ENCODE measurements at regions of chr6 and their contacts with region 1.

Region 1: DNA sequence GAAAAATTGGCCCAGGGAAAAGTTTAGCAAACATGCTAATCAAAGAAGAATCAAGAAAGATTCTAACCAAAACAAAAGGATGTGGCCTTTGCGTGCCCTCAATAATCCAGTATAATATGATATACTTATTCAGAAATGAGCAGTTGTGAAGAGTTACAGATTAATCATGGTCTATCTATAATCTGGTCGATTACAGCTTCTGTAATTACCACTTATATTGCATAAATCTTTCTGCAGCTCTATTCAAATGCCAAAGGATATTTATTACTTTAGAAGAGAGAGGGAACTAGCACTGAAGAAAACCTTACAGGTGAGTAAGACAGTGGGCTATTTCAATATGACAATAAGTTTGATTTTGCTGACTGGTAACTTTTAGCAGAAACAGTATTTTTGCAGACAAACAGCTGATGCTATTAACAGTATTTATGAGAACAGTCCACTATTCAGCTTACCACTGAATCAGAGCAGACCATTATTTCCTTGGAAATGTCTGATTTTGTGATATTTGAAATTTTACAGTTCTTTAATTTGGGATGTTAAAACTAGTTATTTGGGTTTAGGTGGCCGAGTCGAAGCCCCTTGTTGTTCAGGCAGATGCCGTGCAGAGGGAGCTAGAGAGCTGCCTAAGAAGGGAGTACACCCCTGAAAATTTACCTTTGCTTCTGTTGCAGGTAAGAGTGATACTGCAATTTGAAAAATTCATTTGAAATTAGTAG is 92.2 kb downstream of the CEP57L1 start:
- DNase-seq: peak; percentile 56 to 74 (median 68)
- ATAC-seq: peak; percentile 88
- H3K4me3 ChIP-seq: no peak overlapping the region
- H3K27ac ChIP-seq: no peak overlapping the region
- H3K4me1 ChIP-seq: peaks cover 0 to 11% of the 10 kb centered on the region in 2 experiments; a peak in 3 of 5 replicates
- H3K27me3 ChIP-seq: no peaks in the 10 kb centered on the region
- CTCF ChIP-seq: peak; percentile 84 to 91 (median 90)
- EP300 ChIP-seq: no peak
- POLR2A ChIP-seq: no peak
- RAD21 ChIP-seq: peak; percentile 97 to 98

Region 2: DNA sequence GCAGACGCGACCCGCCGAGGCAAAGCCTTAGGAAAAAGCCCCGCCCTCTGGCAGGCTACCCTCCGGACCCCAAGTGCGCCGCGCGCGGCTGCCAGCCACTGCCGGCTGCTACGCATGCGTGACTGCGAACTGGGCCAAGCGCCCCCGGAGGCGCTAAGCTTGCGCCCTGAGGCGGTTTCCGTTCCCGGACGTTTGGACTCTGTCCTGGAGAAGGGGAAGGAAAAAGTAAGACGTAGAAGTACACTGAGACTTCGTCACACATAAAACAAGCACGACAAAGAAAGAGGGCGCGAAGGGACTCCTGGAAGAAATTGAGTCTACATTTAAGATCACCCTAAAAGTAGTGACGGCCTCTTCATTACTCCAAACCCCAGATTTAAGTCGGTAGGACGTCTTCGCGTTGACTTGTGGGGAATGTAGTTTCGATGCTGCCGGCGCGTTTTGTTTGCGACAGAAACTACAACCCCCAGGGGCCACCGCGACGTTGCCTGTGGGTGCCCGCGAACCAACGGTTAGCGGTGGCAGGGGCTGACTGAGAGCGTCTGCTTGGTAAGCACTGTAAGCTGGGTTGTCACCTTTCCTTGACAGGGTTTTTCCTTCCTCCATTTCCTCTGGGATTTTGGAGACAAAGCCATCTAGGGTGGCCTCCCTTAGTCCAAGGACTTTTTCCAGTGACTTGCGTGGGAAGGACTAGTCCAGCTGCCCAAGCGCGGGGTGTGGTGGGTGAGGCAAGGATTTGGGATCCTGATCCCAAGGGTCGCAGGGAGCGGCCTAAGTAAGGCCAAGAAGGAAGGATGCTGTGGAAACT is 92.3 kb before region 1 on chr6 and contains the start of gene CEP57L1:
- CTCF ChIA-PET with region 1: no interaction called
- POLR2A ChIA-PET with region 1: no interaction called
- in situ Hi-C with region 1: no loop called
- intact Hi-C with region 1: loop called (anchors 5 kb)
- DNase-seq: peak; percentile 73 to 98 (median 94)
- ATAC-seq: peak; percentile 85
- H3K4me3 ChIP-seq: peak within 1 kb of the TSS; percentile 84
- H3K27ac ChIP-seq: peak within 1 kb of the TSS; percentile 94
- H3K4me1 ChIP-seq: peaks cover 0 to 10% of the 10 kb centered on the region in 2 experiments; a peak in 2 of 5 replicates
- H3K27me3 ChIP-seq: no peaks in the 10 kb centered on the region
- CTCF ChIP-seq: peak; percentile 31 to 46 (median 38); a peak in 5 of 6 replicates
- EP300 ChIP-seq: no peak; the same call in none of the 2 replicates
- POLR2A ChIP-seq: peak; percentile 80
- RAD21 ChIP-seq: no peak
- polyA plus RNA-seq, gene CEP57L1: 70.0 to 88.6 TPM

Region 3: GRCh38 chr6:109304284-109305015 is 116.9 kb after region 1 on chr6:
- CTCF ChIA-PET with region 1: no interaction called
- POLR2A ChIA-PET with region 1: no interaction called
- in situ Hi-C with region 1: no loop called
- intact Hi-C with region 1: loop called (anchors 2 kb)
- DNase-seq: peak; percentile 81 to 96 (median 86)
- ATAC-seq: peak; percentile 86
- H3K4me3 ChIP-seq: no peak overlapping the region
- H3K27ac ChIP-seq: peak overlapping the region; percentile 90
- H3K4me1 ChIP-seq: peaks cover 50 to 90% of the 10 kb centered on the region in 2 experiments
- H3K27me3 ChIP-seq: no peaks in the 10 kb centered on the region
- CTCF ChIP-seq: 0 out of 6 replicates have a peak, but pooled peaks of 1 of the 3 experiments have one; percentile 9
- EP300 ChIP-seq: peak; percentile 100
- POLR2A ChIP-seq: peak; percentile 43; the same call in 1 of the 2 replicates
- RAD21 ChIP-seq: peak; percentile 36 to 56; a peak in 3 of 4 replicates

Region 4: DNA sequence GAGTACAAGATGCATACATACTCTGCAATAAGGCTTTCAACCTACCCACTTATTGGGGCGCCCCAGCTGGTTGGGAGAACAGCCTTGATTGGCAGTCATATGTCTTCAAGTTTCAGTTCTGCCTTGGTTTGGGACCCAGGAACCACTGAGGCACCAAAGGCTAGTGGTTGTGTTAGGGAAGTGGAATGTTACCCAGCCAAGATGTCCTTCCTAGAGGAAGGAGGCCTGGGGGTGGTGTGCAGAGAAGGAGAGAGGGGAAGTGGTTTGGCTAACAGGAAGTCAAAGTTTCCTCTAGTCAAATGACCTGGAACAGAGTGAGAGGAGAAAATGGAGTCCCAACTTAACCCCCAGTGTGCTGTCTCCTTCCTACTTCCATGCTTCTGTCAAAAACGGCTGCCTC is 135.3 kb after region 1 on chr6:
- CTCF ChIA-PET with region 1: no interaction called
- POLR2A ChIA-PET with region 1: no interaction called
- in situ Hi-C with region 1: no loop called
- intact Hi-C with region 1: no loop called
- DNase-seq: peak in 1 of 4 experiments; percentile 30
- ATAC-seq: peak; percentile 64
- H3K4me3 ChIP-seq: no peak overlapping the region
- H3K27ac ChIP-seq: no peak overlapping the region; the same call in 2 of the 3 replicates
- H3K4me1 ChIP-seq: peaks cover 7 to 13% of the 10 kb centered on the region in 2 experiments; a peak in 3 of 5 replicates
- H3K27me3 ChIP-seq: no peaks in the 10 kb centered on the region
- CTCF ChIP-seq: no peak
- EP300 ChIP-seq: no peak
- POLR2A ChIP-seq: no peak
- RAD21 ChIP-seq: no peak

Region 5: DNA sequence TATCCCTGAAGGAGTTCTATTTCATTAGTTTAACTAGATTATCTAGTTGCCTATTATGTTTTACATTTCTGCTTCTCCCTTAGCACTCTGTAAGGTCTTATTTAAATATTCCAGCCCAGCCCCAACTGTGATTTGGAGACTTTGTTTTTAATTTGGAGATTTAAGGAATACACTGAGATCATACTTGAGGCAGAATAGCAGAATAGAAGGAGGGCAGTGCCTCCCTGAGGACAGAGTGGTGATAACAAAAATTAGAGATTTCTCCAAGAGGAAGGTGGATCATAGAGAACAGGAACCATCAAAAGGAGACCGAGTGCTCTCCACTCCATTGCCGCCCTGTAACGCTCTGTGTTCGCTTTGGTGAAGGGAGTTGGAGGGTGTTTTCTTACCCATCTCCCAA is 209.5 kb after region 1 on chr6:
- CTCF ChIA-PET with region 1: interaction called, 23 read pairs
- POLR2A ChIA-PET with region 1: no interaction called
- in situ Hi-C with region 1: no loop called
- intact Hi-C with region 1: loop called (anchors 1 kb)
- DNase-seq: peak in 3 of 4 experiments; percentile 27 to 48 (median 31)
- ATAC-seq: peak; percentile 86
- H3K4me3 ChIP-seq: no peak overlapping the region
- H3K27ac ChIP-seq: no peak overlapping the region
- H3K4me1 ChIP-seq: peaks cover 0 to 3% of the 10 kb centered on the region in 2 experiments; a peak in 4 of 5 replicates
- H3K27me3 ChIP-seq: no peaks in the 10 kb centered on the region; a peak in 1 of 5 replicates
- CTCF ChIP-seq: peak; percentile 32 to 72 (median 50); a peak in 4 of 6 replicates
- EP300 ChIP-seq: no peak
- POLR2A ChIP-seq: no peak
- RAD21 ChIP-seq: peak; percentile 79 to 84

Region 6: GRCh38 chr6:109526905-109527628 is 339.5 kb after region 1 on chr6:
- CTCF ChIA-PET with region 1: no interaction called
- POLR2A ChIA-PET with region 1: no interaction called
- in situ Hi-C with region 1: no loop called
- intact Hi-C with region 1: loop called (anchors 5 kb)
- DNase-seq: peak; percentile 33 to 80 (median 48)
- ATAC-seq: peak; percentile 98
- H3K4me3 ChIP-seq: no peak overlapping the region
- H3K27ac ChIP-seq: no peak overlapping the region
- H3K4me1 ChIP-seq: no peaks in the 10 kb centered on the region
- H3K27me3 ChIP-seq: peaks cover 9 to 14% of the 10 kb centered on the region in 2 experiments; a peak in 2 of 5 replicates
- CTCF ChIP-seq: peak; percentile 57 to 83 (median 69)
- EP300 ChIP-seq: no peak
- POLR2A ChIP-seq: no peak
- RAD21 ChIP-seq: peak; percentile 74 to 85

Measured in K562 (cell line).